Ovary (tissue), 10 donors: ENCODE measurements at regions of chr1 and their contacts with region 1.

Region 1: DNA sequence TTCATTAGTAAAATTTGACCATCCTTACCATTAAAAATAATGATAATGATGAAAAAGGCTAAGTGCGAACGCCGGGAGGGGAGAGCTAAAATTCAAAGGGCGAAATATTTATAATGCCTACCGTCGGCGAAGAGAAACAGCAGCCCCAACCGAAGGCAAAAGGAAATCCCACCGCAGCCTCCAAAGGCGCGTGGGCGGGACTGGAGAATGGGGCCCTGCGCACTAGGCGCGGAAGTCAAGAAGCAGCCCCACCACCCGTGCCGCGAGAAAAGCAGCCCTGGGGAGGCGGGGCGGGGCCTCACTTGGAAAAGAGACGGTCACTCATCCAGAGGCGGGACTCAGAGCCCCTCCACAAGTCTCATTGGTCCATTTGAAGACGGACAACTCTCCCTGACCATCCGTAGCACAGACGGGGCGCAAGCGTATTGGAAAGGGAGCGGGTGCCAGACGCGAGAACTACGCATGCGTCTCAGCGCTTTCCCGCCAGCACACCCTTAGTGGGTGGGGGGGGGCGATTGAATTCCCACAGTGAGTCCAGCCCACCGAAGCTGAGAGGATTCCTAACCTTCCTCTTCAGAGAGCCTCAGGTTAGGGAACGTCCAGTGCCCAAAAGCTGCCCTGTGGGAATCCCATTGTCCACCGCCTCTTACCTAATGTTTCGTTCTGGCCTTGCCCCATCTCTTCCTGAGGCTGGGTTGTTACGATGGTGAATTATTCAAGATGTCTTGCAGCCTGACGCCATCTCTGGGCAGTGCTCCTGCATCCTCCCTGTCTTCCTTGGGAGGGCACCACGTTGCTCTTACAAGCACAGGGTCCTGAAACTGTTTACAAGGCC is 19.0 kb downstream of the MTX1 start:
- DNase-seq: peak; percentile 97 to 99 (median 98)
- H3K4me3 ChIP-seq: peak overlapping the region; percentile 55
- H3K27ac ChIP-seq: peak overlapping the region; percentile 42 to 82
- H3K4me1 ChIP-seq: peaks cover 6% of the 10 kb centered on the region
- H3K27me3 ChIP-seq: no peaks in the 10 kb centered on the region
- CTCF ChIP-seq: no peak
- EP300 ChIP-seq: no peak
- POLR2A ChIP-seq: peak; percentile 65

Region 2: DNA sequence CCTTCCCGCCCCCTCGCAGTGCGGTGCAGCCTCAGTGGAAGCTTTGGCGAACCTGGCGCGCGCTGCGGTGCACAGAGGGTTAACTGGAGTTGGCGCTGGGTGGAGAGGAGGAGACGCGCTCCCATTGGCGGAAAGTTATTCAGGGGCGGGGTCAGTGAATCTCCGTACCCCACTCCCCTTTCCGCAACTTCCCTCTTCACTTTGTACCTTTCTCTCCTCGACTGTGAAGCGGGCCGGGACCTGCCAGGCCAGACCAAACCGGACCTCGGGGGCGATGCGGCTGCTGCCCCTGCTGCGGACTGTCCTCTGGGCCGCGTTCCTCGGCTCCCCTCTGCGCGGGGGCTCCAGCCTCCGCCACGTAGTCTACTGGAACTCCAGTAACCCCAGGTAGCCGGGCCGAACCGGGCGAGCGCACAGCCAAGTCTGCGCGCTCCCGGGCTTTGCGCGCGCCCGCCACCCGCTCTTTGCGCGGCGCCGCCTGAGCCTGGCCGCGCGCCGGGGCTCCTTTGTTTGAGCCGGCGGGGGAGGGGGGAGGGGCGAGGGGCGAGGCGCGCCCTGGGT is 163.8 kb before region 1 on chr1 and contains the start of gene EFNA4:
- intact Hi-C with region 1: no loop called
- DNase-seq: peak; percentile 83 to 88 (median 86)
- H3K4me3 ChIP-seq: peak within 1 kb of the TSS; percentile 75
- H3K27ac ChIP-seq: peak within 1 kb of the TSS; percentile 71 to 81
- H3K4me1 ChIP-seq: peaks cover 7% of the 10 kb centered on the region
- H3K27me3 ChIP-seq: no peaks in the 10 kb centered on the region
- CTCF ChIP-seq: no peak
- EP300 ChIP-seq: no peak
- POLR2A ChIP-seq: peak; percentile 45
- total RNA-seq, gene EFNA4: 8.6 to 14.1 (median 12.2) TPM

Region 3: DNA sequence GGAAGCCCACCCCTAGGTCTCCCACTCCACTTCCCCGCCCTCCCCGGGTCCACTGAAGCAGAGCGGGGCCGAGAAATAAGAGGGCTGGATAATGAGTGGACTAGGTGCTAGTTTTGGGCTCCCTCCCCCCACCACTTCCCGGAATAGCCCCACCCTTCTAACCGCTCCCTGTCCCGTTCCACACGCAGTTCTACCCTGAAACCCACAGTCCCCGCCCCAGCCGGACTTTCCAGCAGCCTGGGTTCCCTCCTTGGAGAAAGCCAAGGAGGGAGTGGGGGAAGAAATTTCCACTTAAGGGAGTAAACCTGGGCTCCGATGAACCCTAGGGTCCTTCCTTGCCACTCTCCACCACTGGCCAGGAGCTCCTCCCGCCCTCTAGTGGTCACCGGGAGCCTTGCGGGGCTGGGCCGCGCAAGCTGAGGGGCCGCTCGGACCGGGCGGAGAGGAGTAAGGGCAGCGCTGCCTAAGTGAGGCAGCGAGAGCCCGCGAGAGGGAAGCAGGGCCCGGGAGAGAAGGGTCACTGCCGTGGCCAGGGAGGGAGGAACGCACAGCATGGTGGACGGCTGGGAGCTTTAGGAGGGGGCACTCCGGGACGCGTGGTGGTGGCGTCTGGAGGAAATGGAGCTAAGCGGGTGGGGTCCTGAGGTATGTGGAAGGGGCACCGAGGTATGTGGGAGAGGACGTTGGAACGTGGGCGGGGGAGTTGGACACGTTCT is 34.0 kb before region 1 on chr1:
- intact Hi-C with region 1: loop called in 1 of 4 experiments (anchors 5 kb)
- DNase-seq: peak; percentile 86 to 95 (median 91)
- H3K4me3 ChIP-seq: peak overlapping the region; percentile 45
- H3K27ac ChIP-seq: peak overlapping the region; percentile 82 to 95
- H3K4me1 ChIP-seq: peaks cover 13% of the 10 kb centered on the region
- H3K27me3 ChIP-seq: no peaks in the 10 kb centered on the region
- CTCF ChIP-seq: peak; percentile 94 to 99 (median 95)
- EP300 ChIP-seq: peak; percentile 74
- POLR2A ChIP-seq: peak; percentile 77

Region 4: GRCh38 chr1:155208541-155209311 is 18.8 kb before region 1 on chr1 and contains the start of gene MTX1:
- intact Hi-C with region 1: loop called in 1 of 4 experiments (anchors 2 kb)
- DNase-seq: peak; percentile 92 to 97 (median 95)
- H3K4me3 ChIP-seq: peak within 1 kb of the TSS; percentile 59
- H3K27ac ChIP-seq: peak within 1 kb of the TSS; percentile 97 to 100
- H3K4me1 ChIP-seq: peaks cover 8% of the 10 kb centered on the region
- H3K27me3 ChIP-seq: no peaks in the 10 kb centered on the region
- CTCF ChIP-seq: peak in 2 of 3 donors; percentile 19 to 29
- EP300 ChIP-seq: peak; percentile 25
- POLR2A ChIP-seq: peak; percentile 75
- total RNA-seq, gene MTX1: 18.5 to 33.4 (median 27.7) TPM